Keratinocyte (primary cell): ENCODE measurements at regions of chr6 and their contacts with region 1.

Region 1: DNA sequence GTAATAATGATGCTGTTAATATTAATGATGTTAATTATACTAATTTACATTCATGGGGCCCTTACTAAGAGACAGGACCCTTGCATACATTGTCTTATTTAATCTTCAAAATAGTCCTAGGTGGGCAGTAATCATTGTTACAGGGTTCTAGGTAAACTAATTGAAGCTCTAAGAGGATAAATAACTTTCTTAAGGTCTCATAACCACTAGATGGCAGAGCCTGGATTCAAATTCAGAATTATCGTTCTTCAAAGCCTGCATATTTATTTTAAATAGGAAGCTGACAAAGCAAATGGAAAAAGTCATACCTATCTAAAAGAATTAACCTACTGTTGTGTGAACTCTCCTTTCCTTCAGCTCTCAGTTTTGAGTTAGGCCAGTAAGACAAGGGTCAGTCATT is 23.5 kb downstream of the PTCHD4 start:
- DNase-seq: no peak
- H3K4me3 ChIP-seq: no peak overlapping the region
- H3K27ac ChIP-seq: no peak overlapping the region
- H3K4me1 ChIP-seq: no peaks in the 10 kb centered on the region
- H3K27me3 ChIP-seq: no peaks in the 10 kb centered on the region
- CTCF ChIP-seq: peak in 2 of 3 experiments; percentile 28 to 34

Region 2: GRCh38 chr6:49430187-49430586 is 1342.7 kb after region 1 on chr6:
- dilution Hi-C with region 1: loop called (anchors 25 kb)
- DNase-seq: no peak
- H3K4me3 ChIP-seq: no peak overlapping the region
- H3K27ac ChIP-seq: no peak overlapping the region
- H3K4me1 ChIP-seq: no peaks in the 10 kb centered on the region
- H3K27me3 ChIP-seq: no peaks in the 10 kb centered on the region
- CTCF ChIP-seq: no peak